ENCODE measurements at regions of chr4 and their contacts with region 1.

Region 1: GRCh38 chr4:96753216-96753615 is 913.3 kb downstream of the PDHA2 start:
- DNase-seq: no peak
- ATAC-seq: no peak
- H3K4me3 ChIP-seq: no peak overlapping the region
- H3K27ac ChIP-seq: no peak overlapping the region
- H3K4me1 ChIP-seq: no peaks in the 10 kb centered on the region
- H3K27me3 ChIP-seq: no peaks in the 10 kb centered on the region
- CTCF ChIP-seq: no peak
- POLR2A ChIP-seq: no peak

Region 2: GRCh38 chr4:96809563-96809962 is 56.3 kb after region 1 on chr4:
- intact Hi-C with region 1: loop called in 1 of 10 experiments (anchors 10 kb)
- DNase-seq: no peak
- ATAC-seq: no peak
- H3K4me3 ChIP-seq: no peak overlapping the region
- H3K27ac ChIP-seq: no peak overlapping the region
- H3K4me1 ChIP-seq: no peaks in the 10 kb centered on the region
- H3K27me3 ChIP-seq: no peaks in the 10 kb centered on the region
- CTCF ChIP-seq: no peak
- POLR2A ChIP-seq: no peak

Measured in heart left ventricle (tissue), 16 donors.